Heart right ventricle (tissue), 16 donors: ENCODE measurements at regions of chr5 and their contacts with region 1.

Region 1: DNA sequence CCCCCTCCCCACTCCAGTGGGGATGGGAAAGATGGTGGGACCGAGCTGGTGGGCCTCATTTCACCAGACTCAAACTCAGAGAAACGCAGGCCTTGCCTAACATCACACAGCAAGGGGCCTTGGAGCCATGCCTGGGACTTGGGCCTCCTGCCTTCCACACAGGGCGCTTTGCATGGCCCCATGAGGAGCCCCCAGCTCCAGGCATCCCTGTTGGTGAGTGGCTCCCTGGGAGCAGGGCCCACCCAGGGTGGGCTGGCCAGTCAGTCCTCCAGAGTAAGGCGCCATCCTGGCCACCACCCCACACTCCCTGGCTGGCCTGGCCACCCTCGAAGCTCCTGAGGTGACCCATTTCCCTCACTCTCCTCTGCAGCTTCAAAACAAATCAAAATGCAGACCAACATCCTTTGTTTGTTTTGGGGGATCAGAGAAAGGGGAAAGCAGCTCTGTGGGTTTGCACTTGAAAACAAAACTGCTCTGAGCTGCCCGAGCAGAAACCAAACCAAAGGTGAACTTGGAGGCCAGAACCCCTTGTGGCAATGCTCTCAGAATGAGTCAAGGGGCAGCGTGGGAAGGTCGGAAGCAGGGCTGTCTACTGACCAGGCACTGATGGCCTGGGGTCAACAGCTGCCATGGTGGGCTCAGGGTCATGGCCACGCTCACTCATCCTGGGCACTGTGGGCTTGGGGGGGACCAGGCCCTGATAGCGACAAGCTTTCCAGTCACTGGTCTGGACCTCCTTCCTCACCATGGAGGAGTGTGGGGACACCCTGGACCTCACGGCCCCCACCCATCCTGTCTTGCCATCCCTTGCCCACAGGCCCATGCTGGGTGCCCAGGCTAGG is 37.0 kb upstream of the VDAC1 start:
- DNase-seq: no peak
- ATAC-seq: peak in 1 of 8 donors; percentile 9
- H3K4me3 ChIP-seq: no peak overlapping the region
- H3K27ac ChIP-seq: no peak overlapping the region
- H3K4me1 ChIP-seq: no peaks in the 10 kb centered on the region
- H3K27me3 ChIP-seq: no peaks in the 10 kb centered on the region
- CTCF ChIP-seq: no peak

Region 2: GRCh38 chr5:134140530-134141201 is 98.9 kb after region 1 on chr5:
- intact Hi-C with region 1: loop called (anchors 1 to 5 kb)
- DNase-seq: peak in 1 of 2 donors; percentile 57
- ATAC-seq: peak; percentile 50 to 82 (median 74)
- H3K4me3 ChIP-seq: no peak overlapping the region
- H3K27ac ChIP-seq: no peak overlapping the region
- H3K4me1 ChIP-seq: peaks cover 9 to 46% (median 24%) of the 10 kb centered on the region in 9 donors
- H3K27me3 ChIP-seq: no peaks in the 10 kb centered on the region
- CTCF ChIP-seq: peak; percentile 49 to 82 (median 76)

Region 3: GRCh38 chr5:134145779-134146581 is 104.2 kb after region 1 on chr5:
- intact Hi-C with region 1: loop called in 9 of 10 experiments (anchors 1 to 5 kb)
- DNase-seq: peak; percentile 73 to 75
- ATAC-seq: peak; percentile 69 to 91 (median 84)
- H3K4me3 ChIP-seq: no peak overlapping the region
- H3K27ac ChIP-seq: no peak overlapping the region
- H3K4me1 ChIP-seq: peaks cover 4 to 49% (median 24%) of the 10 kb centered on the region in 9 donors
- H3K27me3 ChIP-seq: no peaks in the 10 kb centered on the region
- CTCF ChIP-seq: peak; percentile 92 to 98 (median 95)